ENCODE measurements at regions of chr18 and their contacts with region 1.

Region 1: DNA sequence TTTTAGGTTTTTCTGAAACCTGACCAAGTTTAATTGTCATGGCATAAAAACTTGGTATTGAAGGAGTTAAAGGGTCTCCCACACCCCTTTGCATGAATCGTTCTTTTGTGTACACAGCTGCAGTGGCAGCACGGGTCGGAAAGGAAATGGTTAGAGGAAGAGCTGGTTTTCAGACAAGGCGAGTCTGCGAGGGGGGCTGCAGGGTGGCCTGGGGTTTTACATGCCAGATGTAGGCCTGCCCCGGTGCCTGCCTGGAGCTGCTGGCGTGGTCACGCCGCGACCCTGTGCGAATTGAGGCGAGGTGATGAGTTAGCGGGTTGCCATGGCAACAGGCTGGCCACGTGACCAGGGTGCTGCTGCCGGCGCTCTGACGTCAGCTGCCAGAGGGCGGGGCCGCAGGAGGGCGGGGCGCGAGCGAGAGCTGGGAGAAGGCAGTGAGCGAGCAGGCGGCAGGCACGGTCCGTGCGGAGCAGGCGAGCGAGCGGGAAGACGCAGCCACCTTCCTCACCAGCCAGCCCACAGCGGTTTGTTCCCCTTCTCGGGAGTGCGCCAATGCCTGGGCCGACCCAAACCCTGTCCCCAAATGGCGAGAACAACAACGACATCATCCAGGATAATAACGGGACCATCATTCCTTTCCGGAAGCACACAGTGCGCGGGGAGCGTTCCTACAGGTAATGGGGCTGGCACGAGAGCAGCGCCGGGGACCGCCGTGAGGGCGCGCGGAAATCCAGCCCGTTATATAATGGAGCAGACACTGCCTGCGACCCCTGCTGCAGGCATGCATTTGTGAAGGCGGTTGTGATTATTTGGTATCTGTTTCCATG is at the start of gene MAPRE2:
- DNase-seq: peak; percentile 100
- ATAC-seq: peak; percentile 73 to 94 (median 89)
- H3K4me3 ChIP-seq: peak within 1 kb of the TSS; percentile 77
- H3K4me3 Mint-ChIP-seq: peak within 1 kb of the TSS; percentile 96
- H3K27ac ChIP-seq: peak within 1 kb of the TSS; percentile 93
- H3K27ac Mint-ChIP-seq: peak within 1 kb of the TSS; percentile 98 to 99
- H3K4me1 ChIP-seq: peaks cover 43% of the 10 kb centered on the region
- H3K4me1 Mint-ChIP-seq: peaks cover 89 to 93% of the 10 kb centered on the region in 2 donors
- H3K27me3 ChIP-seq: no peaks in the 10 kb centered on the region
- H3K27me3 Mint-ChIP-seq: peaks cover 0 to 4% of the 10 kb centered on the region in 2 donors
- CTCF ChIP-seq: no peak
- total RNA-seq, gene MAPRE2: 159 to 283 (median 207) TPM

Region 2: GRCh38 chr18:34787931-34788532 is 253.2 kb before region 1 on chr18:
- intact Hi-C with region 1: no loop called
- DNase-seq: peak in 1 of 2 donors; percentile 71
- ATAC-seq: peak; percentile 75 to 88 (median 80)
- H3K4me3 ChIP-seq: no peak overlapping the region
- H3K4me3 Mint-ChIP-seq: no peak overlapping the region
- H3K27ac ChIP-seq: no peak overlapping the region
- H3K27ac Mint-ChIP-seq: no peak overlapping the region
- H3K4me1 ChIP-seq: no peaks in the 10 kb centered on the region
- H3K4me1 Mint-ChIP-seq: no peaks in the 10 kb centered on the region
- H3K27me3 ChIP-seq: peaks cover 2% of the 10 kb centered on the region
- H3K27me3 Mint-ChIP-seq: peaks cover 25 to 36% of the 10 kb centered on the region in 2 donors
- CTCF ChIP-seq: peak; percentile 95

Region 3: GRCh38 chr18:34866739-34867138 is 174.5 kb before region 1 on chr18:
- intact Hi-C with region 1: loop called (anchors 2 kb)
- DNase-seq: peak in 1 of 2 donors; percentile 6
- ATAC-seq: no peak
- H3K4me3 ChIP-seq: no peak overlapping the region
- H3K4me3 Mint-ChIP-seq: no peak overlapping the region
- H3K27ac ChIP-seq: no peak overlapping the region
- H3K27ac Mint-ChIP-seq: no peak overlapping the region
- H3K4me1 ChIP-seq: peaks cover 4% of the 10 kb centered on the region
- H3K4me1 Mint-ChIP-seq: peaks cover under 1 to 6% of the 10 kb centered on the region in 2 donors
- H3K27me3 ChIP-seq: peaks cover 3% of the 10 kb centered on the region
- H3K27me3 Mint-ChIP-seq: peaks cover 6 to 8% of the 10 kb centered on the region in 2 donors
- CTCF ChIP-seq: peak; percentile 32

Region 4: GRCh38 chr18:34976899-34977837 is 64.0 kb before region 1 on chr18:
- intact Hi-C with region 1: loop called (anchors 1 kb)
- DNase-seq: peak; percentile 82 to 85
- ATAC-seq: peak; percentile 71 to 85 (median 82)
- H3K4me3 ChIP-seq: peak overlapping the region; percentile 100
- H3K4me3 Mint-ChIP-seq: peak overlapping the region; percentile 95
- H3K27ac ChIP-seq: peak overlapping the region; percentile 30
- H3K27ac Mint-ChIP-seq: peak overlapping the region; percentile 87 to 90
- H3K4me1 ChIP-seq: peaks cover 27% of the 10 kb centered on the region
- H3K4me1 Mint-ChIP-seq: peaks cover 27 to 36% of the 10 kb centered on the region in 2 donors
- H3K27me3 ChIP-seq: no peaks in the 10 kb centered on the region
- H3K27me3 Mint-ChIP-seq: peaks cover 7 to 16% of the 10 kb centered on the region in 2 donors
- CTCF ChIP-seq: no peak

Region 5: GRCh38 chr18:35029770-35030169 is 11.4 kb before region 1 on chr18:
- intact Hi-C with region 1: loop called (anchors 1 kb)
- DNase-seq: peak in 1 of 2 donors; percentile 71
- ATAC-seq: peak; percentile 74 to 87 (median 77)
- H3K4me3 ChIP-seq: peak overlapping the region; percentile 44
- H3K4me3 Mint-ChIP-seq: peak overlapping the region; percentile 94
- H3K27ac ChIP-seq: peak overlapping the region; percentile 90
- H3K27ac Mint-ChIP-seq: peak overlapping the region; percentile 95
- H3K4me1 ChIP-seq: peaks cover 15% of the 10 kb centered on the region
- H3K4me1 Mint-ChIP-seq: peaks cover 51 to 56% of the 10 kb centered on the region in 2 donors
- H3K27me3 ChIP-seq: no peaks in the 10 kb centered on the region
- H3K27me3 Mint-ChIP-seq: no peaks in the 10 kb centered on the region
- CTCF ChIP-seq: peak; percentile 48

Region 6: GRCh38 chr18:35106845-35107148 is 65.6 kb after region 1 on chr18:
- intact Hi-C with region 1: loop called (anchors 1 kb)
- DNase-seq: peak in 1 of 2 donors; percentile 57
- ATAC-seq: peak; percentile 76 to 88 (median 84)
- H3K4me3 ChIP-seq: no peak overlapping the region
- H3K4me3 Mint-ChIP-seq: peak overlapping the region; percentile 28
- H3K27ac ChIP-seq: peak overlapping the region; percentile 73
- H3K27ac Mint-ChIP-seq: no peak overlapping the region
- H3K4me1 ChIP-seq: no peaks in the 10 kb centered on the region
- H3K4me1 Mint-ChIP-seq: peaks cover 51 to 73% of the 10 kb centered on the region in 2 donors
- H3K27me3 ChIP-seq: no peaks in the 10 kb centered on the region
- H3K27me3 Mint-ChIP-seq: no peaks in the 10 kb centered on the region
- CTCF ChIP-seq: no peak

Region 7: DNA sequence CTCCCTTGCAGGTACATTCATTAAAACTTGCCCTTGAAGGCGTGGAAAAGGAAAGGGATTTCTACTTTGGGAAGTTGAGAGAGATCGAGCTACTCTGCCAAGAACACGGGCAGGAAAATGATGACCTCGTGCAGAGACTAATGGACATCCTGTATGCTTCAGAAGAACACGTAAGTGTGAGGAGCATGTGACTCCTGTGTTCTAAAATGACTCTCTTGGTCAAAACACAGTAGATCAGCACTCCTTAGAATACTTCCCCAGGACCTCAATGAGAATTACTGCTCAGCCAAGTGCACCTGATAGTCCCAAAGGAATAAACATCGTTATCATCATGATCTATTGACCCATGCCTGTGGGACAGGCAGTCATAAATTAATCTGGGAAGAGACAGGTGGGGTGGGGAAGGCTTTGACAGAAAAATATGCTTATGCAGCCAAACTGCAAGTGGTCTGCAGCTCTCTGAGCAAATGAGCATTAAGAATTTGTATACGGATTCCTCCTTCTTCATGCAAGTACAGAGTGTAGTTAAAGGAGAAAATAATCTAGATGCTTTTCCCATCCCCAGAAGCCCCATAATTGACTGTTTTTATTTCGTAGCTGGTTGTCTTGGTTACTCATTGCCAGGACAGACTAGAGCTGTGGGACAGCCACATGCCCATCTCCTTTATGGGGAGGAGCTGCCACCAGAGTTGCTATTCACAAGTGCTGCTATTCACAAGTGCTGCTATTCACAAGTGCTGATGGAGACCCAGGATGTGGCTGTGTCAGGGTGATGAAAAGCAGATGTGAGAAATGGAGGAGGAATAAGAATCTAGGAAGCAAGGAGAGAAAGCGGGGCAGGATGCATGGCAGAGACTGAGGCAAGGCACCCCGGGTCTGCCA is 91.1 kb after region 1 on chr18:
- intact Hi-C with region 1: loop called (anchors 1 kb)
- DNase-seq: peak in 1 of 2 donors; percentile 56
- ATAC-seq: peak; percentile 82 to 93 (median 91)
- H3K4me3 ChIP-seq: no peak overlapping the region
- H3K4me3 Mint-ChIP-seq: peak overlapping the region; percentile 4
- H3K27ac ChIP-seq: peak overlapping the region; percentile 85
- H3K27ac Mint-ChIP-seq: peak overlapping the region; percentile 80 to 97
- H3K4me1 ChIP-seq: peaks cover 23% of the 10 kb centered on the region
- H3K4me1 Mint-ChIP-seq: peaks cover 70 to 77% of the 10 kb centered on the region in 2 donors
- H3K27me3 ChIP-seq: no peaks in the 10 kb centered on the region
- H3K27me3 Mint-ChIP-seq: no peaks in the 10 kb centered on the region
- CTCF ChIP-seq: no peak

Region 8: DNA sequence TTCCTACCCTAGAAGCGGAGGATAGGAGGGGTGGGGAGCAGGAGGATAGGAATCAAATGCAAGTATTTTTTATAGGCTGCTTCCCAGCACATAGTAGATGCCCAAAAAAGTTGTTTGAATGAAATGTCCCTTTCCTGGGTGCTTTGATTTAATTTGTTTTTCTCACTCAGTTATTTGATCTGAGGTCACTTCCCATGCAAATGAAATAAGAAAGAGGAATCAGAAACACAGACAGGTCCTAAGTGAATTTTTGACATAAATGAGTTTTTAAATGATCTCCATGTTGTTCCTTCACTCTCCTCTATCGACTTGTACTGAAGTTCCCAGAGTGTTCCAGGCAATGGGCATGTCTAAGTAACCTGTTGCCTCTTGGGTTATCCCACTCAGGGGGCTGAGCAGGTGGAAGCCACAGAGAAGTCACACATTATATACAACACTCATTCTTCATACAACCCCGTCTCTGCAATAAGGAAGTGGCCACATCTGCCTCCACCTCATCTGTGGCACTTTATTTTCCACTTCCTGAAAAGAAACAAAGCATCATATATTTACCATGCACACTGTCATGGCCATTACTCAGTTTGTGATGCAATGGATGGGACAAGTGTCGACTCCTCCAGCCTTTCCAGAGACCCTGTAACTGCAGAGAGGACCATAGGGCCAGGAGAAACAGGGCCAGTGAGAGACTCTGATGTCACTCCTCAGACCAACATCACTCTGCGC is 117.7 kb after region 1 on chr18:
- intact Hi-C with region 1: loop called (anchors 2 kb)
- DNase-seq: peak; percentile 30 to 36
- ATAC-seq: peak; percentile 84 to 88 (median 85)
- H3K4me3 ChIP-seq: no peak overlapping the region
- H3K4me3 Mint-ChIP-seq: peak overlapping the region; percentile 62
- H3K27ac ChIP-seq: peak overlapping the region; percentile 86
- H3K27ac Mint-ChIP-seq: peak overlapping the region; percentile 92
- H3K4me1 ChIP-seq: peaks cover 50% of the 10 kb centered on the region
- H3K4me1 Mint-ChIP-seq: peaks cover 71 to 72% of the 10 kb centered on the region in 2 donors
- H3K27me3 ChIP-seq: no peaks in the 10 kb centered on the region
- H3K27me3 Mint-ChIP-seq: no peaks in the 10 kb centered on the region
- CTCF ChIP-seq: no peak

Measured in natural killer cell (primary cell).